Right ventricle myocardium superior (tissue), 1 donor: ENCODE measurements at regions of chr16 and their contacts with region 1.

Region 1: GRCh38 chr16:86563489-86564345 is 2.9 kb upstream of the FOXC2 start:
- DNase-seq: peak; percentile 92
- ATAC-seq: peak; percentile 81

Region 2: GRCh38 chr16:86751076-86752030 is 187.6 kb after region 1 on chr16:
- intact Hi-C with region 1: no loop called
- DNase-seq: no peak
- ATAC-seq: no peak

Region 3: DNA sequence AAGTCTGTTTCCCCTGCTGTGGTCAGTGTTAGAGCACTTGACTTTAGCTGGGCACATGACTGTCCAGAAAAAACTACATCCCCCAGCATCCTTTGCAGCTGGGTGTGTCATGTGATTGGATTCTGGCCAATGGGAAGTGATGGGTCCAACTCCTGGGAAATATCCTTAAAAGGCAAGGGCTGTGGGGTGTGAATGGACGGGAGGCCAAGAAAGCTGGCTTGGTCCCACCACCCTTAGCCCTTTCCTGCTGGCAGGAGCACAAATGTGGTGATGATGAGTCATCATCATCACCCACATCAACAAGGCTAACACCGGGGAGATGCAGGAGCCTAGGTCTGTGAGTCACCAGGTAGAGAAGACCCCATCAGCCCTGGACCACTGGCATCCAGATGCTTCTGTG is 411.7 kb after region 1 on chr16:
- intact Hi-C with region 1: no loop called
- DNase-seq: no peak
- ATAC-seq: peak; percentile 56

Region 4: DNA sequence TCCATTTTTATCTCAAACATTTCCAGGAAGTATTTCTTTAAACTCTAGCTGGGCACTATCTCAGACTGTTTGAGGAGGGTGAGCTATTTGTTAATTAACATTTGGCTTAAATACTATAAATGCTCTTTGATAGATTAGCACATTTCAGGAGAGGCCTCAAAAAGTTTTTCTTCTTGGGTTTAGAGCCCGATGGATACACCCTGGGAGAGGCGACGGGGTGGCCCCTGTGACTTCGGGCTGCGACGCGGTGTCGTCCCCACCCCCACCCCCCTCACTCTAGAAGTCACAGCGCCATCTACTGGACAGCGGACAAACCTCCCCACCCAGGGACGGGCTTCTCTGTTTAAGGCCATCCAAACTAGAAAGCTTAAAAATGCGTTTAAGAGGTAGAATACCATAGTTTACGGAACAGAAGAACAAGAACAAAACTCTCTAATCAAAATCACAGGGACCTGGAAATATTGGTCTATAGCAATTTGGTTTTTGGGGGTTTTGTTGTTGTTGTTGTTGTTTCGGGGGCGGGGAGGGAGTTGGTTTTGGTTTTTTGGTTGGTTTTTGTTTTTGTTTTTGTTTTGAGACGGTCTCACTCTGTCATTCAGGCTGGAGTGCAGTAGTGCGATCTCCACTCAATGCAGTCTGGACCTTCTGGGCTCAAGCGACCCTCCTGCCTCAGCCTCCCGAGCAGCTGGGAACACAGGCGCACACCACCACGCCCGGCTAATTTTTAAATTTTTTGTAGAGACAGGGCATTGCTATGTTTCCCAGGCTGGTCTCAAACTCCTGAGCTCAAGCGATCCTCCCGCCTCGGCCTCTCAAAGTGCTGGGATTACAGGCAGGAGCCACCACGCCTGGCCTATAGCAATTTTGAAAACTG is 499.1 kb after region 1 on chr16:
- intact Hi-C with region 1: loop called (anchors 1 kb)
- DNase-seq: peak; percentile 81
- ATAC-seq: peak; percentile 97